Activated T-helper 1 cell treated with anti-CD3 and anti-CD28 coated beads, Interleukin-12 subunit alpha, Interleukin-12 subunit beta, Interleukin-2, Interleukin-4 antibody, amounts not matched to agents 30 ng/mL and 10 ng/mL and 1 ng/mL, durations not matched to agents 14 hours and 24 hours and 36 hours (primary cell): ENCODE measurements at regions of chr6 and their contacts with region 1.

Region 1: GRCh38 chr6:157764178-157765033 is 58.6 kb upstream of the SNX9 start:
- DNase-seq: peak; percentile 80
- H3K4me3 Mint-ChIP-seq: peak overlapping the region; percentile 34
- H3K27ac Mint-ChIP-seq: peak overlapping the region; percentile 98
- H3K4me1 Mint-ChIP-seq: peaks cover 82% of the 10 kb centered on the region
- H3K27me3 Mint-ChIP-seq: peaks cover 10% of the 10 kb centered on the region

Region 2: GRCh38 chr6:157054531-157054979 is 709.9 kb before region 1 on chr6:
- intact Hi-C with region 1: loop called (anchors 10 kb)
- DNase-seq: peak; percentile 35
- H3K4me3 Mint-ChIP-seq: peak overlapping the region; percentile 53
- H3K27ac Mint-ChIP-seq: peak overlapping the region; percentile 95
- H3K4me1 Mint-ChIP-seq: peaks cover 33% of the 10 kb centered on the region
- H3K27me3 Mint-ChIP-seq: no peaks in the 10 kb centered on the region

Region 3: GRCh38 chr6:157461000-157461915 is 303.1 kb before region 1 on chr6:
- intact Hi-C with region 1: loop called (anchors 1 kb)
- DNase-seq: peak; percentile 75
- H3K4me3 Mint-ChIP-seq: peak overlapping the region; percentile 63
- H3K27ac Mint-ChIP-seq: peak overlapping the region; percentile 95
- H3K4me1 Mint-ChIP-seq: peaks cover 66% of the 10 kb centered on the region
- H3K27me3 Mint-ChIP-seq: no peaks in the 10 kb centered on the region

Region 4: GRCh38 chr6:157779705-157780604 is 15.5 kb after region 1 on chr6:
- intact Hi-C with region 1: no loop called
- DNase-seq: no peak
- H3K4me3 Mint-ChIP-seq: no peak overlapping the region
- H3K27ac Mint-ChIP-seq: no peak overlapping the region
- H3K4me1 Mint-ChIP-seq: no peaks in the 10 kb centered on the region
- H3K27me3 Mint-ChIP-seq: peaks cover 46% of the 10 kb centered on the region

Region 5: GRCh38 chr6:157806131-157806855 is 41.9 kb after region 1 on chr6:
- intact Hi-C with region 1: no loop called
- DNase-seq: no peak
- H3K4me3 Mint-ChIP-seq: no peak overlapping the region
- H3K27ac Mint-ChIP-seq: no peak overlapping the region
- H3K4me1 Mint-ChIP-seq: peaks cover 31% of the 10 kb centered on the region
- H3K27me3 Mint-ChIP-seq: peaks cover 23% of the 10 kb centered on the region

Region 6: DNA sequence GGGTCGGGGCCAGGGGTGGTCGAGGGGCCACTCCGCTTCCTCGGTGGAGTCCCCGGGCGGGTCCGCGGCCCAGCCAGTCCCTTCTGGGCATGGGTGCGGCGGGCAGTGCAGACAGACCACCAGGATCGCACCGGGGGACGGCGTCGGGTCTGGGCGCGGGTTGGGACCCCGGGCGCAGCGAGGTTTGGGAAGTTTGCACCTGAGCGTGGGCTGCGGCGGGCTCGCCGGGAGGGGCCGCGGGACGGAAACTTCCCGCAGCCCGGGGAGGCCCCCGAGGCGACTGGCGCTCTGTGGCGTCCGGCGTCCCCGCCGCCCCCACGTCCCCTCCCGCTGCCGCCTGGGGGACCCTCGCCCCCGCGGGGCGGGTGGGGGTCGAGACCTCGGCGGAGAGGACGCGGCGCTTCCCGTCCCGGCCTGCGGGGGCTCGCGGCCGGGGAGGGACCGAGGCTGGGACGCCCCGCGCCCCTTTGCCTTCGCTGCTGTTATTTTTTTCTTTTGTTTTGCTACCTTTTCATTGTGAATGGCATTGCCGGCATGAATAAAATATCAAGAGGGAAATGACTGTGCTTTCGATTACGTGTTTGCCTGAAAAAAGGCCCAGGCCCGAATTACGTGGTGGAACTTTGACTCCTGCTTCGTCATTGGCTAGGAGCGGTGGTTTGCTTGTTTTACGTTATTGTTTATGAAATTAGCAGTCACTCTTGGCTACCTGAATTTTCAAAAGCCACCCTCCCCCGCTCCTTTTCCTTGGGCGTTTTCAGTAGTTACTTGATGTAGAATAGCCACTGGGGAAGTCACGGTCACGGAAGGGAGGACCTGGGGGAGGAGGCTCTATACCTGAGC is 59.3 kb after region 1 on chr6:
- intact Hi-C with region 1: loop called (anchors 1 kb)
- DNase-seq: peak; percentile 72
- H3K4me3 Mint-ChIP-seq: peak overlapping the region; percentile 93
- H3K27ac Mint-ChIP-seq: peak overlapping the region; percentile 97
- H3K4me1 Mint-ChIP-seq: peaks cover 47% of the 10 kb centered on the region
- H3K27me3 Mint-ChIP-seq: peaks cover 34% of the 10 kb centered on the region

Region 7: GRCh38 chr6:157898169-157898568 is 133.8 kb after region 1 on chr6:
- intact Hi-C with region 1: no loop called
- DNase-seq: no peak
- H3K4me3 Mint-ChIP-seq: peak overlapping the region; percentile 19
- H3K27ac Mint-ChIP-seq: peak overlapping the region; percentile 23
- H3K4me1 Mint-ChIP-seq: peaks cover 63% of the 10 kb centered on the region
- H3K27me3 Mint-ChIP-seq: no peaks in the 10 kb centered on the region

Region 8: GRCh38 chr6:157946865-157947532 is 182.6 kb after region 1 on chr6:
- intact Hi-C with region 1: loop called (anchors 2 kb)
- DNase-seq: no peak
- H3K4me3 Mint-ChIP-seq: no peak overlapping the region
- H3K27ac Mint-ChIP-seq: peak overlapping the region; percentile 24
- H3K4me1 Mint-ChIP-seq: peaks cover 32% of the 10 kb centered on the region
- H3K27me3 Mint-ChIP-seq: peaks cover 9% of the 10 kb centered on the region

Region 9: DNA sequence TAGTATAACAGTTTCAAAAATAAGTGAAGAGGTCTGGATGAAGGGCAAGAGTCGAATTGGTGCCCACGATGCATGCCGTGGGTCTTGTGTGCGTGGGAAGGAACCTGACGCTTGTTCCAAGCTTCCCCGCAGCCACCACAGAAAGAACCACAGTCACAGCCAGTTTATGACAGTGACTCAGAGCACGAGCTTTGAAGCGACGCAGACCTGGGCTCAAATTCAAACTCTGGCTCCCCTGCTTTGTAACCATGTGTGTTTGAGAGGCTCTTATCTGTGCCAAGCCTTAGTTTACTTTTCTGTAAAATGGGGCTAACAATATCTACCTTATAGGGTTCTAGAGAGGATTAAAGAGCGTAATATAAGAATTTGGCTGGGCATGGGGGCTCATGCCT is 282.7 kb after region 1 on chr6:
- intact Hi-C with region 1: loop called (anchors 5 kb)
- DNase-seq: peak; percentile 55
- H3K4me3 Mint-ChIP-seq: peak overlapping the region; percentile 53
- H3K27ac Mint-ChIP-seq: peak overlapping the region; percentile 66
- H3K4me1 Mint-ChIP-seq: peaks cover 38% of the 10 kb centered on the region
- H3K27me3 Mint-ChIP-seq: no peaks in the 10 kb centered on the region

Region 10: DNA sequence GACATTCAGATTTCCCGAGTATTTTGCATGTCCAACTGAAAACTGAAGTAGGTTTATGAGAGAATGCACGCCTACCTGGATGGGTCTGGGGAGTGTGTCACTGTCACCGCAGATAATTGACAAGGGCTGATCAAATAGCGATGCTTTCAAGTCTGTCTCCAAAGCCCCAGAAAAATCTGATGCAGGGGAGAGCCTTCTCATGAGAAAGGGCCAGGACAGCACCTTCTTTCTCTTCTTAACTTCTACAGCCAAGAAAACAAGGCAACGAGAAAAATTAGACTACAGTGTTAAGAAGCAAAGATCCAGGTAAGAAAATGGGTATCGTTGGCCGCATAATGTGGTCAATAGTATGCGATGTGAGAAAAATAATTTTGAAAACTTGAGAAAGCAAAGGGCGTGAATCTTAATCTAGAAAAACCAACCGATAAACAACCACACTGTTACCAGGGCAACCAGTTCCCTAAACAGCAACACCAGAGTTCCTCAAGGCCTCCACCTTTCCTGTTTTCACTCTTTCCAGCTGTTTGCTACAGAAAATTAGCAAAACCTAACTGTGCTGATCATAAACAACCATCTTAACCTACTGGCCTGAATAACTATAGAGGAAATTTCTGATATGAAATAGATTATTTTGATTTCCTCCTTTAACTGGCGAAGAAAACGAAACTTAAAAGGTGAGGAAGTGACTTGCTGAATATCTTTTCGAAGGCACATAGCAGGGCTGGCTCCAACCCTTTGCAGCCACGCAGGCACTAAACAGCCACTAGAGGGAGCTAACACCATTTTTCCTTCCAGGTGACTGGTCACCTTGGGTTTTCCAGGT is 1277.8 kb after region 1 on chr6:
- intact Hi-C with region 1: loop called (anchors 10 kb)
- DNase-seq: peak; percentile 74
- H3K4me3 Mint-ChIP-seq: peak overlapping the region; percentile 91
- H3K27ac Mint-ChIP-seq: peak overlapping the region; percentile 90
- H3K4me1 Mint-ChIP-seq: peaks cover 68% of the 10 kb centered on the region
- H3K27me3 Mint-ChIP-seq: no peaks in the 10 kb centered on the region